ENCODE measurements at regions of chr17 and their contacts with region 1.

Region 1: DNA sequence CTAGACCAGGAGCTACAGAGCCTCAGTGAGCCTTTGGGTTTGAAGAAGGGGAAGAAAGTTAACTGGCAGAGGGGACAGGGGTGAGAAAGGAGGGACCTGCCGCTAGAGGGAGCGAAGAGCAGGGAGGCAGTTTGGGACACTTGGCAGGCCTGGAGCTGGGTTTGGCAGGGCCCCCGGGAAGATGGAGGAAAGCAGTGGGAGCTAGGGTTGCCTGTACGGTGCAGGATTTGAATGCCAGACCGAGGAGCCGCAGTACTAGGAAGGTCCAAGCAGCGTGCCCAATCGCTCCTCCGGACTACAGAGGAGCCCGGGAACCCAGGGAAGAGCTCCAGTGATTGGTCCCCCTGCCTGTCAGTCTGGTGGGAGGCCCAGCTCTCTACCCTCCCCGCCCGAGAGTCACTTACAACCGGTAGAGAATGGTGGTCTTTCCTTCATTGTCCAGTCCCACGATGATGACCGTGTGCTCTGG is 1.3 kb downstream of the ARL5C start:
- DNase-seq: peak; percentile 51 to 83 (median 69)
- ATAC-seq: peak; percentile 91 to 94 (median 93)
- H3K4me3 ChIP-seq: peak overlapping the region; percentile 76 to 85
- H3K4me3 Mint-ChIP-seq: peak overlapping the region; percentile 79 to 86 (median 85)
- H3K27ac ChIP-seq: no peak overlapping the region
- H3K27ac Mint-ChIP-seq: peak overlapping the region in 1 of 2 donors; percentile 11
- H3K4me1 ChIP-seq: peaks cover 5 to 40% of the 10 kb centered on the region in 2 experiments
- H3K4me1 Mint-ChIP-seq: peaks cover 23 to 32% (median 30%) of the 10 kb centered on the region in 3 donors
- H3K27me3 ChIP-seq: peaks cover 0 to 54% of the 10 kb centered on the region in 2 experiments
- H3K27me3 Mint-ChIP-seq: peaks cover 23 to 33% of the 10 kb centered on the region in 2 donors

Region 2: GRCh38 chr17:38889745-38890734 is 274.7 kb before region 1 on chr17:
- CTCF ChIA-PET with region 1: interaction called, 4 to 10 read pairs
- POLR2A ChIA-PET with region 1: no interaction called
- DNase-seq: peak in 3 of 35 experiments; percentile 22 to 44 (median 26)
- ATAC-seq: peak; percentile 20 to 48 (median 33)
- H3K4me3 ChIP-seq: no peak overlapping the region
- H3K4me3 Mint-ChIP-seq: peak overlapping the region in 1 of 3 donors; percentile 75
- H3K27ac ChIP-seq: peak overlapping the region; percentile 42
- H3K27ac Mint-ChIP-seq: peak overlapping the region; percentile 90 to 93
- H3K4me1 ChIP-seq: peaks cover 70 to 97% of the 10 kb centered on the region in 2 experiments
- H3K4me1 Mint-ChIP-seq: peaks cover 85 to 96% (median 91%) of the 10 kb centered on the region in 3 donors
- H3K27me3 ChIP-seq: no peaks in the 10 kb centered on the region
- H3K27me3 Mint-ChIP-seq: no peaks in the 10 kb centered on the region

Region 3: GRCh38 chr17:39153599-39154051 is 11.1 kb before region 1 on chr17:
- CTCF ChIA-PET with region 1: interaction called, 5 to 51 read pairs
- POLR2A ChIA-PET with region 1: interaction called in 1 of 2 experiments, 3 read pairs
- DNase-seq: peak; percentile 76 to 97 (median 90)
- ATAC-seq: peak; percentile 57 to 66 (median 59)
- H3K4me3 ChIP-seq: peak overlapping the region; percentile 92 to 99
- H3K4me3 Mint-ChIP-seq: peak overlapping the region; percentile 95 to 100 (median 100)
- H3K27ac ChIP-seq: peak overlapping the region; percentile 70
- H3K27ac Mint-ChIP-seq: peak overlapping the region; percentile 96 to 99
- H3K4me1 ChIP-seq: peaks cover 2 to 53% of the 10 kb centered on the region in 2 experiments
- H3K4me1 Mint-ChIP-seq: peaks cover 43 to 56% (median 47%) of the 10 kb centered on the region in 3 donors
- H3K27me3 ChIP-seq: peaks cover 0 to 16% of the 10 kb centered on the region in 2 experiments
- H3K27me3 Mint-ChIP-seq: peaks cover 0 to 9% of the 10 kb centered on the region in 2 donors

Region 4: GRCh38 chr17:39174907-39175694 is 10.4 kb after region 1 on chr17:
- CTCF ChIA-PET with region 1: interaction called, 7 to 29 read pairs
- POLR2A ChIA-PET with region 1: interaction called in 1 of 2 experiments, 3 read pairs
- DNase-seq: peak; percentile 46 to 93 (median 75)
- ATAC-seq: peak; percentile 81 to 93 (median 85)
- H3K4me3 ChIP-seq: no peak overlapping the region
- H3K4me3 Mint-ChIP-seq: no peak overlapping the region
- H3K27ac ChIP-seq: no peak overlapping the region
- H3K27ac Mint-ChIP-seq: no peak overlapping the region
- H3K4me1 ChIP-seq: peaks cover 0 to 21% of the 10 kb centered on the region in 2 experiments
- H3K4me1 Mint-ChIP-seq: peaks cover 11 to 20% (median 16%) of the 10 kb centered on the region in 3 donors
- H3K27me3 ChIP-seq: peaks cover 0 to under 1% of the 10 kb centered on the region in 2 experiments
- H3K27me3 Mint-ChIP-seq: peaks cover 0 to 2% of the 10 kb centered on the region in 2 donors